GM12878 (cell line): ENCODE measurements at regions of chr1 and their contacts with region 1.

Region 1: GRCh38 chr1:9784508-9785133 is 39.1 kb downstream of the CLSTN1 start:
- DNase-seq: peak; percentile 61
- ATAC-seq: peak; percentile 28
- H3K4me3 ChIP-seq: peak overlapping the region; percentile 4; the same call in 1 of the 2 replicates
- H3K27ac ChIP-seq: peak overlapping the region; percentile 69
- H3K4me1 ChIP-seq: peaks cover 46% of the 10 kb centered on the region
- H3K27me3 ChIP-seq: no peaks in the 10 kb centered on the region
- CTCF ChIP-seq: peak; percentile 79 to 92 (median 86)
- EP300 ChIP-seq: no peak
- POLR2A ChIP-seq: no peak
- RAD21 ChIP-seq: peak; percentile 96

Region 2: DNA sequence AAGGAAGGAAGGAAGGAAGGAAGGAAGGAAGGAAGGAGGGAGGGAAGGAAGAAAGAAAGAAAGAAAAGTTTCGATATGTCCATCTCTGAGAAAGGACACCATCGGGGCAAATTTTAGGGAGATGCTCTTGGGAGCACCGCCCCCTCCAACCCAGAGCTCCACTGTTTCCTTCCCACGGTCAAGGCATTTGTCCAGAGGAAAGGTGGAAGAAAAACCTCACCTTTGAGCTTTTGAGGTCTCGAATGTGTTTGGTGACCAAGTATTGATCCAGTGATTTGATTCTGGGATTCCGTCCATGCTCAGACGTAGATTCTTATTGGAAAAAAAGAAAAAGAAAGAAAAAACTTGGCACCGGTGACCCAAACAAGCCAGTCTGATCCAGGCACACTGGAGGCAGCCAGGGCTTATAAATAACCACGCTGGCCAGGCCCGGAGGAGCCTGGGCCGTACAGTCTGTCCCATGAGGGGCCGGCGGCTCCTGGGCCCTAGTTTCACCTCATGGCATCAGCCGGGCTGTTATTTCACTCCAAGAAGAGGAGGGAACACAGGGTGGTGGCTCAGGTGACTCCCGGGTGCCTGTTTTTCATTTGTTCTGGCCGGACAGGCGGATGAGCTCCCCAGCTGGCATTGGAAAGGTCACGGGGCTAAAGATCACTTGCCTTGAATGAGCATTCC is 281.5 kb before region 1 on chr1:
- CTCF ChIA-PET with region 1: no interaction called
- POLR2A ChIA-PET with region 1: no interaction called
- RAD21 ChIA-PET with region 1: no interaction called
- SMC1A ChIA-PET with region 1: no interaction called
- in situ Hi-C with region 1: no loop called
- intact Hi-C with region 1: no loop called
- DNase-seq: no peak
- ATAC-seq: no peak
- H3K4me3 ChIP-seq: no peak overlapping the region
- H3K27ac ChIP-seq: no peak overlapping the region
- H3K4me1 ChIP-seq: no peaks in the 10 kb centered on the region
- H3K27me3 ChIP-seq: no peaks in the 10 kb centered on the region
- CTCF ChIP-seq: no peak
- EP300 ChIP-seq: no peak
- POLR2A ChIP-seq: no peak
- RAD21 ChIP-seq: no peak

Region 3: GRCh38 chr1:9615316-9616063 is 169.1 kb before region 1 on chr1:
- CTCF ChIA-PET with region 1: interaction called, 12 read pairs
- POLR2A ChIA-PET with region 1: no interaction called
- RAD21 ChIA-PET with region 1: interaction called, 15 read pairs
- SMC1A ChIA-PET with region 1: interaction called, 9 read pairs
- in situ Hi-C with region 1: no loop called
- intact Hi-C with region 1: no loop called
- DNase-seq: no peak
- ATAC-seq: peak; percentile 98
- H3K4me3 ChIP-seq: no peak overlapping the region
- H3K27ac ChIP-seq: no peak overlapping the region
- H3K4me1 ChIP-seq: no peaks in the 10 kb centered on the region
- H3K27me3 ChIP-seq: no peaks in the 10 kb centered on the region
- CTCF ChIP-seq: peak; percentile 95 to 96 (median 96)
- EP300 ChIP-seq: no peak
- POLR2A ChIP-seq: no peak
- RAD21 ChIP-seq: peak; percentile 77

Region 4: GRCh38 chr1:9823943-9824701 is 39.5 kb after region 1 on chr1 and contains the start of gene CLSTN1:
- CTCF ChIA-PET with region 1: interaction called, 40 read pairs
- POLR2A ChIA-PET with region 1: interaction called, 5 read pairs
- RAD21 ChIA-PET with region 1: interaction called, 11 read pairs
- SMC1A ChIA-PET with region 1: interaction called, 49 read pairs
- in situ Hi-C with region 1: no loop called
- intact Hi-C with region 1: loop called (anchors 2 kb)
- DNase-seq: peak; percentile 9
- ATAC-seq: peak; percentile 65
- H3K4me3 ChIP-seq: peak within 1 kb of the TSS; percentile 96
- H3K27ac ChIP-seq: peak within 1 kb of the TSS; percentile 32; the same call in 1 of the 2 replicates
- H3K4me1 ChIP-seq: peaks cover 26% of the 10 kb centered on the region
- H3K27me3 ChIP-seq: no peaks in the 10 kb centered on the region
- CTCF ChIP-seq: no peak
- EP300 ChIP-seq: no peak
- POLR2A ChIP-seq: no peak
- RAD21 ChIP-seq: no peak
- polyA plus RNA-seq, gene CLSTN1: 2.7 to 5.6 TPM

Region 5: GRCh38 chr1:9867408-9868243 is 83.0 kb after region 1 on chr1:
- CTCF ChIA-PET with region 1: interaction called, 562 read pairs
- POLR2A ChIA-PET with region 1: interaction called, 9 read pairs
- RAD21 ChIA-PET with region 1: interaction called, 174 read pairs
- SMC1A ChIA-PET with region 1: interaction called, 428 read pairs
- in situ Hi-C with region 1: loop called (anchors 5 kb)
- intact Hi-C with region 1: loop called (anchors 1 kb)
- DNase-seq: peak; percentile 36
- ATAC-seq: peak; percentile 90
- H3K4me3 ChIP-seq: no peak overlapping the region
- H3K27ac ChIP-seq: no peak overlapping the region
- H3K4me1 ChIP-seq: peaks cover 22% of the 10 kb centered on the region
- H3K27me3 ChIP-seq: no peaks in the 10 kb centered on the region
- CTCF ChIP-seq: peak; percentile 94 to 98 (median 98); a peak in 5 of 6 replicates
- EP300 ChIP-seq: no peak
- POLR2A ChIP-seq: no peak
- RAD21 ChIP-seq: peak; percentile 97

Region 6: GRCh38 chr1:10032590-10033358 is 248.2 kb after region 1 on chr1 and contains the start of gene UBE4B:
- CTCF ChIA-PET with region 1: no interaction called
- POLR2A ChIA-PET with region 1: no interaction called
- RAD21 ChIA-PET with region 1: no interaction called
- SMC1A ChIA-PET with region 1: no interaction called
- in situ Hi-C with region 1: no loop called
- intact Hi-C with region 1: loop called (anchors 10 kb)
- DNase-seq: peak; percentile 83
- ATAC-seq: peak; percentile 98
- H3K4me3 ChIP-seq: peak within 1 kb of the TSS; percentile 99
- H3K27ac ChIP-seq: peak within 1 kb of the TSS; percentile 79
- H3K4me1 ChIP-seq: no peaks in the 10 kb centered on the region
- H3K27me3 ChIP-seq: no peaks in the 10 kb centered on the region
- CTCF ChIP-seq: peak; percentile 78 to 97 (median 90); a peak in 5 of 6 replicates
- EP300 ChIP-seq: peak in 1 of 2 experiments; percentile 23; a peak in 1 of 4 replicates
- POLR2A ChIP-seq: peak; percentile 62; the same call in 1 of the 2 replicates
- RAD21 ChIP-seq: peak; percentile 63
- polyA plus RNA-seq, gene UBE4B: 2.9 to 7.4 TPM